ENCODE measurements at regions of chr17 and their contacts with region 1.

Region 1: DNA sequence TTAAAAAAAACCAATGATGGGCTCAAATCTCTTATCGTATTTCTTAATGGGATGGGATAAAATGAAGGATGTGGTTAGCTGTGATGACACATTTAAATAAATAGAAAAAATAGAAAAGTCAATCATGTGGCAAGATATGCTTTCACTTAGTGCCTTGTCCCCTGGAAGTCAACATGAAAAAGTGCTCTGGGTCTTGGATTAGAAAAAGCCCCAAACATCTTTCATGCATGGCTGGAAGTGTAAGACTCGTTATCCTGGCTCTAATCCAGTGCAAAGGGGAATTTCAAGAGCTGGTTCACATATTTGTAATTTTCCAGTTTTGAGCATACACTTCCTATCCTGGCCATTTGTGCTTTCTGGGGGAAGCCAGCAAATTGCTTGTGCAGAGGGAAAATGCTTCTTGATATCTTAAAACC is 160.9 kb downstream of the MAP2K6 start:
- DNase-seq: no peak
- ATAC-seq: no peak
- H3K4me3 ChIP-seq: no peak overlapping the region
- H3K27ac ChIP-seq: no peak overlapping the region
- H3K4me1 ChIP-seq: no peaks in the 10 kb centered on the region
- H3K27me3 ChIP-seq: peaks cover 8% of the 10 kb centered on the region
- CTCF ChIP-seq: no peak
- POLR2A ChIP-seq: no peak
- RAD21 ChIP-seq: no peak

Region 2: DNA sequence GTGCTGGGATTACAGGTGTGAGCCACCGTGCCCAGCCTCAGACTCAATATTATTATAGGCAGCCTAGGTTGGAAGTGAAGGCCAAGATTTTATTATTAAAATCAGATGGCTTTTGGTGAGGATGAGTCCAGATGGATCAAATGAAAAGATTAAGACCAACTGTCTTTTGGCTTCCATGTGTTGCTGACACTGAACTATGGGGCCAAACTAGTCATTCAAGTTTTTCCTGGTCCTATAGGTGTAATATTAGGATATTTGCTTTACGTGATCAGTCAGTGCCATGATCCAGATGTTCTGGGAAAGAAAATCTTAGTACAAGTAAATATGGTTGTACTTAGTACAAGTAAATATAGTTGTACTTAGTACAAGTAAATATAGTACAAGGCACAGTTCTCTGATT is 20.3 kb before region 1 on chr17:
- CTCF ChIA-PET with region 1: no interaction called
- POLR2A ChIA-PET with region 1: no interaction called
- RAD21 ChIA-PET with region 1: no interaction called
- intact Hi-C with region 1: no loop called
- DNase-seq: no peak
- ATAC-seq: no peak
- H3K4me3 ChIP-seq: no peak overlapping the region
- H3K27ac ChIP-seq: no peak overlapping the region
- H3K4me1 ChIP-seq: no peaks in the 10 kb centered on the region
- H3K27me3 ChIP-seq: no peaks in the 10 kb centered on the region
- CTCF ChIP-seq: no peak
- POLR2A ChIP-seq: no peak
- RAD21 ChIP-seq: no peak

Region 3: DNA sequence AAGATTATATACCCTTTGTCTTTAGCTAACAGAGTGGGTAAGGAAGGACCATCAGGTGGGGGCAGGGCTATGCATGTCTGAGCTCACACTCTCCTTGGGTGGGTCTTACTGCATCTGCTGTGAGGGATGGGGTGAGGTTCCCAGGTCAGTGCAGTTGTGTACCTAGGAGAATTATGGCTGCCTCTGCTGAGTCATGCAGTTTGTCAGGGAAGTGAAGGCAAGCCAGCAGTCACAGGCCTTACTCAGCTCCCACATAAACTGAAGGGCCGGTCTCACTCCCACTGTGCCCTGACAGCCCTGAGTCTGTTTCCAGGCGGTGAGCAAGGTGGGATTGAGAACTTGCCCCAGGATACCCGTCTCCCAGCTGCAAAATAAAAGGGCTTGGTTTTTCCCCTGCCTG is 167.7 kb after region 1 on chr17:
- CTCF ChIA-PET with region 1: no interaction called
- POLR2A ChIA-PET with region 1: no interaction called
- RAD21 ChIA-PET with region 1: no interaction called
- intact Hi-C with region 1: no loop called
- DNase-seq: no peak
- ATAC-seq: no peak
- H3K4me3 ChIP-seq: no peak overlapping the region
- H3K27ac ChIP-seq: no peak overlapping the region
- H3K4me1 ChIP-seq: no peaks in the 10 kb centered on the region
- H3K27me3 ChIP-seq: no peaks in the 10 kb centered on the region
- CTCF ChIP-seq: no peak
- POLR2A ChIP-seq: no peak
- RAD21 ChIP-seq: no peak

Region 4: GRCh38 chr17:70629902-70630301 is 1054.5 kb after region 1 on chr17:
- CTCF ChIA-PET with region 1: interaction called, 12 read pairs
- POLR2A ChIA-PET with region 1: no interaction called
- RAD21 ChIA-PET with region 1: no interaction called
- intact Hi-C with region 1: no loop called
- DNase-seq: no peak
- ATAC-seq: no peak
- H3K4me3 ChIP-seq: no peak overlapping the region
- H3K27ac ChIP-seq: no peak overlapping the region
- H3K4me1 ChIP-seq: no peaks in the 10 kb centered on the region
- H3K27me3 ChIP-seq: no peaks in the 10 kb centered on the region
- CTCF ChIP-seq: no peak; a peak in 1 of 6 replicates
- POLR2A ChIP-seq: no peak
- RAD21 ChIP-seq: peak; percentile 45